OCI-LY7 (cell line): ENCODE measurements at regions of chr21 and their contacts with region 1.

Region 1: GRCh38 chr21:35007348-35007747 is 41.8 kb downstream of the RUNX1 start:
- DNase-seq: no peak
- H3K4me3 ChIP-seq: no peak overlapping the region
- H3K27ac ChIP-seq: no peak overlapping the region
- H3K4me1 ChIP-seq: no peaks in the 10 kb centered on the region
- CTCF ChIP-seq: no peak

Region 2: DNA sequence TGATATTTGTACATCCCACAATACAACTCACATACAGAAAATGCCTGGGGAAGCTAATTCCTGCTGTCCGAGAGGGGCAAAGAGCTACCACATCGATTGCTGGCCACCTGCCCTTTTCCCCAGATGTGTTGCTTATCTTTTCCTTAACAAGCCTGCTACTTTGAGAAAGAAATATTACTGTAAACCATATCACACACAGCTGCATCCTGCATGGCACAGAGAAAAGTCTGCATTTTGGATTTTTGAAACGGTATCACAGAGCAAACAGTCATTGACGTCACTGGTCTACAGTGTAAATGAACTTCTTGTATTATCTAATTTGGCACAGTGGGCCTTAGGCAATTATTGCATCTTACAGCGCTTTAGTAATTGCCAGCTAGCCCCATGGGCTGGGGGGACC is 173.9 kb before region 1 on chr21:
- CTCF ChIA-PET with region 1: interaction called, 17 read pairs
- POLR2A ChIA-PET with region 1: no interaction called
- intact Hi-C with region 1: no loop called
- DNase-seq: no peak
- H3K4me3 ChIP-seq: no peak overlapping the region
- H3K27ac ChIP-seq: no peak overlapping the region
- H3K4me1 ChIP-seq: no peaks in the 10 kb centered on the region
- CTCF ChIP-seq: no peak

Region 3: DNA sequence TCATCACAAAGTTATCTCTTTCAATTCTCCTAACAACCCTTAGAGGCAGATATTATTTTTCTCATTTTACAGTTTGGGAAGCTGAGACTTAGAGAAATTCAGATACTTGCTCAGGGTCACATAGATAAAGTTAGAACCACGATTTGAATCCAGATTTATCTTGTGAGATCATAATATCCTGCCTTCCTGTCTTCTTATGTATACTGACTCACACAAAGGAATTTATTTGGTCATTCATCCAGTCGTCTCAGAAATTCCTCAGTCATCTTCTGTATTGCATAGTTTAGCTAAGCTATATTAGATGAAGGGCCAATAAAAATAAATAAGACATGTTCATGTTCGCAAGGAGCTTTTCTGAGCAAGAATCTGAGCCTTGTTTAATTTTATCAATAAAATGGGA is 77.5 kb after region 1 on chr21:
- CTCF ChIA-PET with region 1: no interaction called
- POLR2A ChIA-PET with region 1: no interaction called
- intact Hi-C with region 1: no loop called
- DNase-seq: no peak
- H3K4me3 ChIP-seq: no peak overlapping the region
- H3K27ac ChIP-seq: no peak overlapping the region
- H3K4me1 ChIP-seq: no peaks in the 10 kb centered on the region
- CTCF ChIP-seq: no peak